H1 (cell line): ENCODE measurements at regions of chr12 and their contacts with region 1.

Region 1: DNA sequence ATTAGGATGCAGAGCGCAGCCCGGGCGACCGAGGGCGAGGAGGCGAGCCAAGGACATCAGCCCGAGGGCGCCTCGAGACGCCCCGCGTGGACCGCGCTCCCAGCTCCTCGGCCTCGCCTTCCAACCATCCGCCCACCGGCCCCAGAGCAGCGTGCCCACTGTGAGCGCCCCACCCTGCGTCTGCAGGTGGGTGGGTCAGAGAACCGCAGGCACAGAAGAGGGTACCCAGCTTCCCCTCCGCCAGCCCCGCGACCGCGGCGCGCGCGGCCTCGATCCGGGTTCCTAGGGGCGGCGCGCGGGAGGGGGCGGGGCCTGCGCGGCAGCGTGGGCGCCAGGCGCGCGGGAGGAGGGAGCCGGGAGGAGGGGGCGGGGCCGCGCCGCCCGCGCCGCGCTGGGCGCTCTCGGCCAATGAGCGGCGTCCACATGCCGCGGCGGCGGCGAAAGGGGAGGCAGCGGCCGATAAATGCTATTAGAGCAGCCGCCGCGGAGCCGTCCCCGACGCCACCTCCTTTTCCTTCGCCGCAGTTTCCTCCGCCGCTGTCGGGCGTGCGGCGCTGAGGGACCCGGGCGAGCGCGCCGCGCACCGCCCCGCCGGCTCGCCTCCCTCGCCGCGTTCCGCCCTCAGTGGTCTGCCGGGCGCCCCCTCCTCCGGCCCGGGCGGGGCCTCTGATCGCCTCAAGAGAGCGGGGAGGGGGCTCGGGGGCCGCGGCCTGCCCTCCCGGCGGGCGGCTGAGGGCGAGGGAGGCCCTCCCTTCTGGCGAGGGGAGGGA is at the start of gene ATP2A2:
- DNase-seq: peak in 1 of 2 experiments; percentile 82
- H3K4me3 ChIP-seq: peak within 1 kb of the TSS; percentile 91 to 98 (median 94)
- H3K27ac ChIP-seq: peak within 1 kb of the TSS; percentile 97
- H3K4me1 ChIP-seq: peaks cover 4 to 13% (median 8%) of the 10 kb centered on the region in 4 experiments; a peak in 5 of 7 replicates
- H3K27me3 ChIP-seq: peaks cover 0 to 3% (median 1%) of the 10 kb centered on the region in 4 experiments; a peak in 2 of 7 replicates
- CTCF ChIP-seq: no peak
- EP300 ChIP-seq: no peak
- POLR2A ChIP-seq: peak; percentile 76 to 79
- RAD21 ChIP-seq: no peak; a peak in 1 of 4 replicates
- total RNA-seq, gene ATP2A2: 271 and 275 TPM in 2 replicates

Region 2: DNA sequence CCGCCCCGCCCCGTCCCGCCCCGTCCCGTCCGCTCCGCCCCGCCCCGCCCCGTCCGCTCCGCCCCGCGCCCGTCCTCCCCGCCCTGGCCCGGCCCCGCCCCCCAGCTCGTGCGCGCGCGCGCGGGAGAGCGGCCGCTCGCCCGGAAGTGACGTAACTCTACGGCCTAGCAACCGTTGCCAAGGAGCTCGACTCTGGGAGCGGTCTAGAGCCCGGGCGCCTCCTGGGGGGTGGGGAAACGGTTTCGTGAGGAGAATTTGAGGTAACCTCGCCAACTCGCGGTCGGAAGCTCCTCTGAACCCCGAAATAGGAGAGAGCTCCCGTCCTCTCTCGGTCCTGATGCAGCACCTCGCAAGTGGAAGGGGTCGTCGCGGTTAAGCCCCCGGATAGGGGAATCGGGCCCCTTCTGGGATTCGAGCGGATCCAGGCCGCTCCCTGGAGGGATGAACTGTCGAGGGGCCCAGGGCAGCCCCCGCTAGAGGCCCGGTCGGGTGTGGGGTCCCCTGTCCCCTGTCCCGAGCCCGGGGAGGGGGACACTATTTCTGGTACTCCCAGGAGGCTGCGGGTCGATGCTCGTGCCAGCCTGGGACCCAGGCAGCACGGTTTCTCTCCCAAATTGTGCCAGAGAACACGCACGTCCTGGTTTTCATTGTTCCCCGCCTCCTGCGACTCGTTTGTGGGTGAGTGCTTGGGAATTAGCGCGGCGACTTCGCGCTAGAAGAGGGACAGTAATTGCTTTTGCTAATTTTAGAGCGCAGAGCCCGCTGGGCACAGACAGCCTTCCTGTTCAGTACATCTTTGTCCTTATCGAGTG is 156.6 kb before region 1 on chr12 and contains the start of gene IFT81:
- CTCF ChIA-PET with region 1: no interaction called
- POLR2A ChIA-PET with region 1: interaction called, 19 read pairs
- DNase-seq: peak; percentile 58 to 99
- H3K4me3 ChIP-seq: peak within 1 kb of the TSS; percentile 90 to 98 (median 94)
- H3K27ac ChIP-seq: peak within 1 kb of the TSS; percentile 86
- H3K4me1 ChIP-seq: peaks cover 0 to 11% (median 10%) of the 10 kb centered on the region in 4 experiments; a peak in 6 of 7 replicates
- H3K27me3 ChIP-seq: peaks cover 0 to 2% (median 0%) of the 10 kb centered on the region in 4 experiments; a peak in 3 of 7 replicates
- CTCF ChIP-seq: no peak
- EP300 ChIP-seq: no peak
- POLR2A ChIP-seq: no peak; a peak in 2 of 3 replicates
- RAD21 ChIP-seq: no peak
- total RNA-seq, gene IFT81: 14.4 and 14.5 TPM in 2 replicates

Region 3: DNA sequence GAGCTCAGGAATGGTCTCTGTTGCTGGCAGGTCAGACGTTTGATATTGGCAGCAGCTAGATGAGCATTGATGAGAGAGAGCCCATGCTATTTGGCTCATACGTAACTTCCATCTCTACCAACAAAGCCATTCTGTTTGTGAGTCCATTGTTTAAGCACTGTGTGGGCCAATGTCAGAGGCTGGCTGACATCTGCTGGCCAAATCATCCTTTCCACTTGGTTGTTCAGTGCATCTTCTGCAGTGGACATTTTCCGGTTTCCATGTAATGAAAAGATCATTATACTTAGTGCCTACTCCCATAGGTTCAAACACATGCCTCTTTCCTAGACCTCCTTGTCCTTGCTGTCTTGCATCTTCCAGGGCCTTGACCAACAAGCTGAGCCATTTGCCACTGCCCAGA is 97.6 kb before region 1 on chr12:
- CTCF ChIA-PET with region 1: no interaction called
- POLR2A ChIA-PET with region 1: no interaction called
- DNase-seq: no peak
- H3K4me3 ChIP-seq: no peak overlapping the region
- H3K27ac ChIP-seq: no peak overlapping the region
- H3K4me1 ChIP-seq: no peaks in the 10 kb centered on the region
- H3K27me3 ChIP-seq: no peaks in the 10 kb centered on the region
- CTCF ChIP-seq: no peak
- EP300 ChIP-seq: no peak
- POLR2A ChIP-seq: no peak
- RAD21 ChIP-seq: no peak

Region 4: GRCh38 chr12:110247333-110248104 is 33.4 kb before region 1 on chr12:
- CTCF ChIA-PET with region 1: interaction called, 5 read pairs
- POLR2A ChIA-PET with region 1: interaction called, 10 read pairs
- DNase-seq: no peak
- H3K4me3 ChIP-seq: no peak overlapping the region
- H3K27ac ChIP-seq: no peak overlapping the region
- H3K4me1 ChIP-seq: peaks cover 4 to 13% (median 6%) of the 10 kb centered on the region in 4 experiments; a peak in 6 of 7 replicates
- H3K27me3 ChIP-seq: no peaks in the 10 kb centered on the region
- CTCF ChIP-seq: no peak
- EP300 ChIP-seq: no peak
- POLR2A ChIP-seq: no peak
- RAD21 ChIP-seq: no peak

Region 5: GRCh38 chr12:110270125-110270962 is 10.6 kb before region 1 on chr12:
- CTCF ChIA-PET with region 1: no interaction called
- POLR2A ChIA-PET with region 1: interaction called, 41 read pairs
- DNase-seq: no peak
- H3K4me3 ChIP-seq: peak overlapping the region in 1 of 4 experiments; percentile 8; a peak in 2 of 8 replicates
- H3K27ac ChIP-seq: no peak overlapping the region; the same call in 1 of the 2 replicates
- H3K4me1 ChIP-seq: peaks cover 9 to 17% (median 14%) of the 10 kb centered on the region in 4 experiments
- H3K27me3 ChIP-seq: no peaks in the 10 kb centered on the region
- CTCF ChIP-seq: no peak
- EP300 ChIP-seq: no peak
- POLR2A ChIP-seq: peak in 1 of 2 experiments; percentile 28; a peak in 1 of 3 replicates
- RAD21 ChIP-seq: no peak